Activated T-helper 2 cell treated with anti-CD3 and anti-CD28 coated beads, Interferon-gamma antibody, Interleukin-2, Interleukin-4, amounts not matched to agents 10 μg/mL and 5 μg/mL and 100 μg/mL, durations not matched to agents 14 hours and 24 hours and 36 hours (primary cell): ENCODE measurements at regions of chr11 and their contacts with region 1.

Region 1: GRCh38 chr11:13668102-13668956 is at the start of gene FAR1:
- DNase-seq: peak; percentile 96
- H3K4me3 Mint-ChIP-seq: peak within 1 kb of the TSS; percentile 97
- H3K27ac Mint-ChIP-seq: peak within 1 kb of the TSS; percentile 96
- H3K4me1 Mint-ChIP-seq: peaks cover 36% of the 10 kb centered on the region
- H3K27me3 Mint-ChIP-seq: peaks cover 10% of the 10 kb centered on the region
- total RNA-seq, gene FAR1: 57.6 and 59.7 TPM in 2 replicates

Region 2: DNA sequence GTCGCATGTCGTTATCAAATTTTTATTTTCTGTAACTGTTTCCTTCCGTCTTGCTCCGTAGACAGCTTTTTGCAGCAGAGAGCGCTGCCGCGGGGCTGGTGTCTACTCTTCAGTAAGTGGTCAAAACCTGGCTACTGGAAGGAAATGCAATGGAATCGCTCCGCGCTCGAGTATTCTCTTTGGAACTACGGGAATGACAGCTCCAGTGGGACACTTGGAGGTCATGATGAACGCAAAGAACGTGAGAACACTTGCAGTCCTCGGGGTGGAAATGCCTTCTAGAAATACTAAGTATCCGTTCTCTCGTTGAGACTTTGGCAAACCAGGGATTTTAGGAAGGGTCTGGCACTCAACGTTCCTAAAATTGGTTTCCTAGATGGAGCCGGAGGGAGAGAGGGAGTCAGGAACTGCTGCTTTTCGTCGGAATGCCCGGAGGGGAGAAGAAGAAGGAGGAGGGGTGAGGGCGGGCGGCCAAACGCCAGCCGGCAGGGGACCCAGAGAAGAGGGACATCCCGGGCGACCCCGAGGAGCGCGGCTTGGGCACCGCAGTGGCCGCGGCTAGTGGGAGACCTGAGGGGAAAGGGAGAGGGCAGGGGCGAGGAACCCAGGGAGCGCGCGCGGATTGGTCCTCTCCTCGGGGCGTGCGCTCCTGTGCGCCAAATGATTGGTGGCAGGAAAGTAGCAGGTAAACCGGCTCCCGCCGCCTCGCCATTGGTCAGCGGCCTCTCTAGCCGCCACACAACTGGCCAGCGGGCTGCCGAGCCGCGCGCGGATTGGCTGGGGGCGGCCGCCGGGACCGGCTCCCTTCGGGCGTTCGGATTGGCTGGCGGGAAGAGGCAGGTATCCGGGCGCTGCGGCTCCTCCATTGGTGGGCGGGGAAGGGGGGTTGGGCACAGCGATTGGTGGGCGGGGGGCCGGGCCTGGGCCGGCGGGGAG is 391.2 kb before region 1 on chr11:
- intact Hi-C with region 1: loop called (anchors 5 kb)
- DNase-seq: peak; percentile 97
- H3K4me3 Mint-ChIP-seq: peak overlapping the region; percentile 98
- H3K27ac Mint-ChIP-seq: peak overlapping the region; percentile 79
- H3K4me1 Mint-ChIP-seq: peaks cover 45% of the 10 kb centered on the region
- H3K27me3 Mint-ChIP-seq: peaks cover 57% of the 10 kb centered on the region

Region 3: GRCh38 chr11:13462901-13463778 is 205.2 kb before region 1 on chr11 and contains the start of gene BTBD10:
- intact Hi-C with region 1: loop called (anchors 1 kb)
- DNase-seq: peak; percentile 91
- H3K4me3 Mint-ChIP-seq: peak within 1 kb of the TSS; percentile 98
- H3K27ac Mint-ChIP-seq: peak within 1 kb of the TSS; percentile 93
- H3K4me1 Mint-ChIP-seq: peaks cover 30% of the 10 kb centered on the region
- H3K27me3 Mint-ChIP-seq: no peaks in the 10 kb centered on the region
- total RNA-seq, gene BTBD10: 22.6 and 24.9 TPM in 2 replicates

Region 4: GRCh38 chr11:13685461-13686108 is 17.3 kb after region 1 on chr11:
- intact Hi-C with region 1: loop called (anchors 2 kb)
- DNase-seq: no peak
- H3K4me3 Mint-ChIP-seq: no peak overlapping the region
- H3K27ac Mint-ChIP-seq: no peak overlapping the region
- H3K4me1 Mint-ChIP-seq: peaks cover 8% of the 10 kb centered on the region
- H3K27me3 Mint-ChIP-seq: no peaks in the 10 kb centered on the region

Region 5: DNA sequence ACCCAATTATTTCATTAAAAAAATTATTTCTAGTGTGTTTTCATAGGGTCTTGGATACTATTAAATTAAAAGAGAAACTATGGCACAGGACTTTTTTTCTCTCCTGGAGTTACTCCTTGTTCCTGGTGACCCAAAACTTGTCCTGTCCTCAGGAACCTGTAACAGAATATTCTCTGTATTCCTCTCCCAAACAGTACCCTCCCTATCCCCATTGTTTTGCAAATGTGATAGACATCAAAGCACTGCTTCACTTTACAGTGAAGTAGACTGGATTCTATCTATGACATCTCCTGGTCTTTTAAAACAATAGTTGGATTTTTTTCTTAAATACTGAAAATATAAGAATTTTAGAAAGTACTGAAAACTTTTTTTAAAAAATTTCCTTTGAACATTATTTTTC is 37.4 kb after region 1 on chr11:
- intact Hi-C with region 1: loop called (anchors 5 kb)
- DNase-seq: no peak
- H3K4me3 Mint-ChIP-seq: no peak overlapping the region
- H3K27ac Mint-ChIP-seq: no peak overlapping the region
- H3K4me1 Mint-ChIP-seq: no peaks in the 10 kb centered on the region
- H3K27me3 Mint-ChIP-seq: no peaks in the 10 kb centered on the region